Spleen (tissue), 13 donors: ENCODE measurements at regions of chr17 and their contacts with region 1.

Region 1: DNA sequence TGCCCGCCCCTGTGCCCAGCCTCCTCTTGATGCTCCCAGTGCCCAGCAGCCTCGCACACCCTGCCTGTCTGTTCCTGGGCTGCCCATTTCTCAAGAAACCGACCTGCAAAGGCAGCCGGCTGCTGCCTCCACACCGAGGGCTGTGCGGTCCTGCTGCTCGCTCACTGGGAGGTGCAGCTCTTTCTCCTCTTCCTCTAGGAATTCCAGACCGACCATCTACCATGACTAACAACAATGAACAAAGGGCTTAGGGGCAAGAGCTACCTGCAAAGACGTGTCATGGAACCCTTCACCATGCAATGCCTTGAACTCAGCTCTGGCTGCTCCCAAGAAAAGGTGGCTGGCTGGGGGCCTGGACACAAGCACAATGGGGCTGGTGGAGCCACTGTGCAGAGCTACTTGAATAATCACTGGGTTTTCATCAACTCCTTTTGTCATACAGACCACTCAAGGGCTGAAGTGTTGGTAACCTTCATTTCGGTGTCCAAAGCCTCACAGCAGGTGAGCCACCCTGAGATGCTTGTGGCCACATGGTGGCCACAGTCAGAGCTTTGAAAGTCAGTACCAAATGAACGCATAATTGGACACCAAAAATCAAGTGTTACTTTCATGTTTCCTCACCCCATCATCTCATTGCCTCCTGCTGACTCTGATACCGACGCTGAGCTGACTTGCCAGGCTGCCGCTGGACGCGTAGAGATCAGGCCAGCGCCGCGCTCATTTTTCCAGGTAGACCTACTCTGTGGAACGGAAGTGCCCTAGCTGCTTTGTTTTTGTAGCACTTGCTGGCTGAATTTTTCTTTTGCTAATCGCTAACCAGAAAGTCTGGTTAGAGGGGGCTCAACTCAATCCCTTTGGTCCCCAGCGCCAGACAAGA is 19.8 kb downstream of the CYB561 start:
- DNase-seq: no peak
- H3K4me3 ChIP-seq: no peak overlapping the region
- H3K27ac ChIP-seq: no peak overlapping the region
- H3K4me1 ChIP-seq: peaks cover 0 to 34% (median 10%) of the 10 kb centered on the region in 6 donors
- H3K27me3 ChIP-seq: peaks cover 0 to 7% (median 0%) of the 10 kb centered on the region in 7 donors
- CTCF ChIP-seq: no peak
- POLR2A ChIP-seq: no peak

Region 2: GRCh38 chr17:63613663-63614062 is 187.4 kb after region 1 on chr17:
- intact Hi-C with region 1: loop called (anchors 2 kb)
- DNase-seq: no peak
- H3K4me3 ChIP-seq: no peak overlapping the region
- H3K27ac ChIP-seq: no peak overlapping the region
- H3K4me1 ChIP-seq: peaks cover 0 to 13% (median 6%) of the 10 kb centered on the region in 6 donors
- H3K27me3 ChIP-seq: no peaks in the 10 kb centered on the region
- CTCF ChIP-seq: no peak
- POLR2A ChIP-seq: no peak